ENCODE measurements at regions of chr7 and their contacts with region 1.

Region 1: DNA sequence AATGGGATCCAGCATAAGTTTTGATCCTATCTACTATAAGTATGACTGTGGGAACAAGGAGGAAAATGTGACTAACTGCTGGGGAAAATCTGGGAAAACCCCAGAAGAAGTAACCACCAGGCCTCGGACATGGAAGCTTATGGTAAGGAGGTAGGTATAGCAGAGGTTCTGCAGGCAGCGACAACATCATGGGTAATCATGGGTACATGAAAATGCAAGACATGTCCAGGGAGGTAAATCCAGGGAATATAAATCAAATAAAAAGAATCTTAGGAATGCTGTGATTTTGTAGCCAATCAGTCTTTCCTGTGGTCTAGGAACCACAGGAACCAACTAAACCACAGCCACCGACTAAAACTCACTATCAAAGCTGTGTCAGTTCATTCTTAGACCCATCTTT is 168.3 kb upstream of the NPY start:
- DNase-seq: no peak
- ATAC-seq: no peak
- H3K4me3 ChIP-seq: no peak overlapping the region
- H3K27ac ChIP-seq: no peak overlapping the region
- H3K4me1 ChIP-seq: no peaks in the 10 kb centered on the region
- H3K27me3 ChIP-seq: no peaks in the 10 kb centered on the region; a peak in 1 of 5 replicates
- CTCF ChIP-seq: no peak
- EP300 ChIP-seq: no peak
- POLR2A ChIP-seq: no peak
- RAD21 ChIP-seq: no peak

Region 2: DNA sequence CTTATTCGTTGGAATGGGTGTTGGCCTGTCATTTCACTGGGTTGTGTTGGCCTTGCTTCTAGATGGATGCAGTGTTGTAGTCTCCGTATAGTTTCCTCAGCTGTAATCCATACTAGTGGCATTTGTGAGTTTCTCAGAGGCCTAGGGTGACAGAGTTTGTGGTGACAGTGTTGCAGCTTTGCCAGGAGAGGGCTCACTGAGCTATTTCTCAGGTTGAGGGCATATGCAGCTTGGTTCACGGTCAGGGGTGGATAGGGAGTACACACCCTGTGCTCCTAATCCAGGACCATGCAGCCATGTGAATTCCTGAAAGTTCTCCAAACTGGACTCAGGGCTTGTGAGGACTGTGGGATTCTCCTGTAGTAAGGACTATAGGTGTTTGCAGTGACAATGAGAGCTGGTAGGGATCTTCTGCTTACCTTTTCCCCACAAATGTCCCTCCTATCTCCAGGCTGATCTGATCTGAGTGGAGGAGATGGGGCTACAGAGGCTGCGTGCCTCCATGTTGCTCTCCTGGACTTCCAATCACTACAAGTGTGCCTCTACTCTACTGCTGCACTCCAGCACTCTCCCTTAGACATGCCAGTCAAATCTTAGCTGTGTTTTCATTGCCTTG is 176.6 kb before region 1 on chr7:
- CTCF ChIA-PET with region 1: no interaction called
- POLR2A ChIA-PET with region 1: no interaction called
- in situ Hi-C with region 1: no loop called
- intact Hi-C with region 1: loop called (anchors 10 kb)
- DNase-seq: peak; percentile 33
- ATAC-seq: peak; percentile 100
- H3K4me3 ChIP-seq: no peak overlapping the region
- H3K27ac ChIP-seq: no peak overlapping the region
- H3K4me1 ChIP-seq: no peaks in the 10 kb centered on the region
- H3K27me3 ChIP-seq: no peaks in the 10 kb centered on the region
- CTCF ChIP-seq: peak; percentile 85
- EP300 ChIP-seq: no peak
- POLR2A ChIP-seq: no peak
- RAD21 ChIP-seq: peak; percentile 55; the same call in 1 of the 2 replicates

Region 3: GRCh38 chr7:24227603-24228359 is 112.1 kb after region 1 on chr7:
- CTCF ChIA-PET with region 1: no interaction called
- POLR2A ChIA-PET with region 1: no interaction called
- in situ Hi-C with region 1: no loop called
- intact Hi-C with region 1: no loop called
- DNase-seq: no peak
- ATAC-seq: no peak
- H3K4me3 ChIP-seq: no peak overlapping the region
- H3K27ac ChIP-seq: no peak overlapping the region
- H3K4me1 ChIP-seq: no peaks in the 10 kb centered on the region
- H3K27me3 ChIP-seq: no peaks in the 10 kb centered on the region; a peak in 1 of 5 replicates
- CTCF ChIP-seq: no peak
- EP300 ChIP-seq: no peak
- POLR2A ChIP-seq: no peak
- RAD21 ChIP-seq: no peak